A673 (cell line): ENCODE measurements at regions of chr18 and their contacts with region 1.

Region 1: GRCh38 chr18:70931942-70932814 is 643.3 kb downstream of the SOCS6 start:
- DNase-seq: peak; percentile 76
- H3K4me3 ChIP-seq: no peak overlapping the region
- H3K27ac ChIP-seq: no peak overlapping the region
- H3K4me1 ChIP-seq: no peaks in the 10 kb centered on the region
- H3K27me3 ChIP-seq: no peaks in the 10 kb centered on the region
- CTCF ChIP-seq: peak; percentile 78

Region 2: DNA sequence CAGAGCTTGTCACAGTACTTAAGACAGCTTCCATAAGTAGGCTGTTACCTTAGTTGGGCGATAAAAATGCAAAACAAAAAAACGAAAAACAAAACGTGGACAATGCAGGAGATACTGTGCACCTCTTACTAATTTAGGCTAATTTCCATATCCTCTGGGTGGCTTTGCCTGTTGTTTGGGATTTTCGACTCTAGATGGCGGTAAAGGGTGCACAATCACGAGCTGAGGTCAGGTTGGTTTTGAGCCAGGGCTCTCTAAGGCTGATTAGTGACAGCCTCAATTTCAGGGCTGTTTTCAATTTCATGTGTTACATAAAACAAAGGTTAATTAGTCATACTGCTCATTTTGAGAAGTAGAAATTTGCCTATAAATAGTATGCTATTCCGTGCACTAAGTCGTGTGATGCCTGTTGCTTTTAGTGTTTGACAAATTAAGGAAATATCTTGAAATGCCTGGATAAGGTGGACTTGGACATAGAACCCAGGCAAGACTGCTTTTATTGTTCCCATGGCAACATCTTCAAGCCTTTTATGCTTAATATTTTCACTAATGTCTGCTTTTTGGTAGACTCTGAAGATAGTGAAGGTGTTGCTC is 150.2 kb before region 1 on chr18:
- CTCF ChIA-PET with region 1: no interaction called
- POLR2A ChIA-PET with region 1: no interaction called
- intact Hi-C with region 1: loop called (anchors 10 kb)
- DNase-seq: peak; percentile 84
- H3K4me3 ChIP-seq: no peak overlapping the region
- H3K27ac ChIP-seq: no peak overlapping the region
- H3K4me1 ChIP-seq: peaks cover 6% of the 10 kb centered on the region
- H3K27me3 ChIP-seq: no peaks in the 10 kb centered on the region
- CTCF ChIP-seq: peak; percentile 87

Region 3: GRCh38 chr18:71075147-71075546 is 143.0 kb after region 1 on chr18:
- CTCF ChIA-PET with region 1: no interaction called
- POLR2A ChIA-PET with region 1: no interaction called
- intact Hi-C with region 1: no loop called
- DNase-seq: no peak
- H3K4me3 ChIP-seq: no peak overlapping the region
- H3K27ac ChIP-seq: no peak overlapping the region
- H3K4me1 ChIP-seq: no peaks in the 10 kb centered on the region
- H3K27me3 ChIP-seq: no peaks in the 10 kb centered on the region
- CTCF ChIP-seq: no peak

Region 4: DNA sequence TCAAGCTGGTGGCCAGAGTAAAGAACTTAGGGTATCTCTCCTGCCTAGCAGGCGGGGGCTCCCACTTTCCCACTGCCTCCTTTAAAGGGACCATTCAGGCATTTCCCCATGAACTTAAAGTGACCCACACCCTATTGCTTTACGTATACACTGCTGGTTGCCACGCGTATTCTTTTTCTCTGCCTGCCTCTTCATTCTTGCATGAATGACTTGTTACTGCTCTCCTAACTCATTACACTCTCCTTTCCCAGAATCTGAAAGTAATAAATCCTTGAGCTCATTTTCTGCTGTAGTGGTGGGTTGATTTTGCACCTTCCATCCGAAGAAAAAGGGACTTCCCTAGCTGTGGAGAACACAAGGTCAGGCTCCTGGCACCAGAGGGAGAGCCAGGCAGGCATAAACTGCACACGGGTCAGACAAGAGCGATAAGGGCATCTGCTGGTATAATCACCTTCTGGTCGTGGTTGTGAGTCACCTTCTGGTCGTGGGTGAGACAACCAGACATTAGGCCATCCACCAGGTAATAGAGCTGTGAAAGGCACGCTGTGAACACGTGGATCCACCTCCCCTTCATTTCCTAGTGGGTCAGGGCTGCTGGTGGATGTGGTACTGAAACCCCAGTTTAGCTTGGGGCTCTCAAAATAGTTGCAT is 306.9 kb after region 1 on chr18:
- CTCF ChIA-PET with region 1: no interaction called
- POLR2A ChIA-PET with region 1: no interaction called
- intact Hi-C with region 1: loop called (anchors 10 kb)
- DNase-seq: no peak
- H3K4me3 ChIP-seq: no peak overlapping the region
- H3K27ac ChIP-seq: no peak overlapping the region
- H3K4me1 ChIP-seq: peaks cover 3% of the 10 kb centered on the region
- H3K27me3 ChIP-seq: no peaks in the 10 kb centered on the region
- CTCF ChIP-seq: no peak

Region 5: GRCh38 chr18:71398531-71398930 is 466.4 kb after region 1 on chr18:
- CTCF ChIA-PET with region 1: no interaction called
- POLR2A ChIA-PET with region 1: no interaction called
- intact Hi-C with region 1: loop called (anchors 5 kb)
- DNase-seq: peak; percentile 67
- H3K4me3 ChIP-seq: no peak overlapping the region
- H3K27ac ChIP-seq: no peak overlapping the region
- H3K4me1 ChIP-seq: no peaks in the 10 kb centered on the region
- H3K27me3 ChIP-seq: no peaks in the 10 kb centered on the region
- CTCF ChIP-seq: peak; percentile 66

Region 6: GRCh38 chr18:71784777-71785176 is 852.6 kb after region 1 on chr18:
- CTCF ChIA-PET with region 1: no interaction called
- POLR2A ChIA-PET with region 1: no interaction called
- intact Hi-C with region 1: loop called (anchors 10 kb)
- DNase-seq: peak; percentile 40
- H3K4me3 ChIP-seq: no peak overlapping the region
- H3K27ac ChIP-seq: no peak overlapping the region
- H3K4me1 ChIP-seq: no peaks in the 10 kb centered on the region
- H3K27me3 ChIP-seq: no peaks in the 10 kb centered on the region
- CTCF ChIP-seq: peak; percentile 65

Region 7: GRCh38 chr18:72086421-72086820 is 1154.2 kb after region 1 on chr18:
- CTCF ChIA-PET with region 1: no interaction called
- POLR2A ChIA-PET with region 1: no interaction called
- intact Hi-C with region 1: loop called (anchors 10 kb)
- DNase-seq: peak; percentile 62
- H3K4me3 ChIP-seq: no peak overlapping the region
- H3K27ac ChIP-seq: no peak overlapping the region
- H3K4me1 ChIP-seq: no peaks in the 10 kb centered on the region
- H3K27me3 ChIP-seq: no peaks in the 10 kb centered on the region
- CTCF ChIP-seq: peak; percentile 63

Region 8: DNA sequence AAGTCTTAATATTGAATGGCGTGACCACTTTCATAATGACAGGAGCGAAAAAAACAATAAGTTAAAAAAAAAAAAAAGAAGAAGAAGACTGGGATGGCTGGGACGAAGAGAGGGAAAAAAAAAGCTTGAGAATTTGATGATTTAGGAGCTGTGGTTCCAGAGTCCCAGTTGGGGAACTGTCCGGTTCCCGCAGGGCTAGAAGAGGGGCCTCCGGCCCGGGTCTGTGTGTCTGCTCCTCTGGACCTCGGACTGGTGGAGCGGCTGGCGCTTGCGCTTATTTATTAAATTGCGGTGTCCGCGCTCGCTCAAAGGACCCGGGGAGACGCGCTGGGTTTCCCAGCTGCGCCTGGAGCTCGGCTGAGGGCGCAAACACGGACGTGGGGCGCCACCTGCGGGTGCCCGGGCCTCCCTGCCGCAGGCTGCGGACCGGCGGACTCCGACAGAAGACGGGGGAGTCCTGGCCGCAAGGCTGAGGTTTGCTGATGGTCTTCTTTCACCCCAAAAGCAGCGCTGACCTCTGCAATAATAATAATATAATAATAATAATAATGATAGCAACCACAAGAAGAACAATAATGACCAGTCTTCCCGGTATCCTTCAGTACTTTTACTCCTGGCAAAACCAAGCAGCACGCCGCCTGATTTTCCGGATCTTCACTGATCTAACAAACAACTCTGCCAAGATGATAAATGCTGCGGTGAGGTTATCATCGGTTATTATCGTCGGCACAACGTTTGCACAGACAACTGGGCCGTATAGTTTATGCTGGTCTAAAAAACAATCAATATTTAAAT is 1612.1 kb after region 1 on chr18 and contains the start of gene CBLN2:
- CTCF ChIA-PET with region 1: no interaction called
- POLR2A ChIA-PET with region 1: no interaction called
- intact Hi-C with region 1: loop called (anchors 5 kb)
- DNase-seq: peak; percentile 86
- H3K4me3 ChIP-seq: peak within 1 kb of the TSS; percentile 51
- H3K27ac ChIP-seq: no peak within 1 kb of the TSS
- H3K4me1 ChIP-seq: peaks cover 7% of the 10 kb centered on the region
- H3K27me3 ChIP-seq: peaks cover 22% of the 10 kb centered on the region
- CTCF ChIP-seq: peak; percentile 84
- total RNA-seq, gene CBLN2: 7.5 and 9.7 TPM in 2 replicates